ENCODE measurements at regions of chr15 and their contacts with region 1.

Region 1: GRCh38 chr15:75036314-75036649 is 12.9 kb downstream of the PPCDC start:
- DNase-seq: no peak

Region 2: GRCh38 chr15:74988007-74988800 is 48.1 kb before region 1 on chr15:
- CTCF ChIA-PET with region 1: no interaction called
- POLR2A ChIA-PET with region 1: no interaction called
- DNase-seq: peak; percentile 65

Region 3: DNA sequence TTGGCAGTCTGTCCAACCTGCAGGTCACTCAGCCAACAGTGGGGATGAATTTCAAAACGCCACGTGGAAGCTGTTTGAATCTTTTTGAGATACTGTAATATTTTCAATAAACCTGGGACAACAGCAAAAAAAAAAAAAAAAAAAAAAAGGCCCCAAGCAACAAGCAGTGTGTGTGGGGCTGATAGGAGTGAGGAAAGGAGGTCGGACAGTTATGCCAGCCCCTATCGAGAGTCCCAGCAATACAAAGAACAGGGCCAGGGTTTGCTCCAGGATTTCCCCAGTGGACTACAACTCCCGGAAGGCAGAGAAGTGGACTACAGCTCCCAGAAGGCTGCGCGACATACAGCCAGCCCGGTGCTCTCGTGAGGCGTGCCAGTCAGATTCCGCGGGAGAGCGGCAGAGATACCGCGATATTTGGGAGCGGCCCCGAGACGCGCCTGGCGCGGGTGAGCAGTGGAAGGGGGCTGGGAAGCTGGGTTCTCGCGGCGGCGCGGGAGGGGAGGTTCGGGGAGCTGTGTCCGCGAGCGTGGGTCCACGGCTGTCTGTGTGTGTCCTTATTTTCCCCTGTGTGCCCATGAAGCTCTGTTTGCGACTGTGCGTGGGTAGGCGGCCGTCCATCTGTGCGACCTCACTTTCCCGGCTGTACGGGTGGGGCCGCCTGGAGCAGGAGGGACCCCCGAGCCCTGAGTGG is 13.0 kb before region 1 on chr15 and contains the start of gene PPCDC:
- CTCF ChIA-PET with region 1: interaction called, 4 read pairs
- POLR2A ChIA-PET with region 1: interaction called, 17 read pairs
- DNase-seq: peak; percentile 100

Region 4: GRCh38 chr15:75123395-75123794 is 87.1 kb after region 1 on chr15:
- CTCF ChIA-PET with region 1: no interaction called
- POLR2A ChIA-PET with region 1: no interaction called
- DNase-seq: no peak

Measured in HEK293T (cell line).